GM12878 (cell line): ENCODE measurements at regions of chr3 and their contacts with region 1.

Region 1: DNA sequence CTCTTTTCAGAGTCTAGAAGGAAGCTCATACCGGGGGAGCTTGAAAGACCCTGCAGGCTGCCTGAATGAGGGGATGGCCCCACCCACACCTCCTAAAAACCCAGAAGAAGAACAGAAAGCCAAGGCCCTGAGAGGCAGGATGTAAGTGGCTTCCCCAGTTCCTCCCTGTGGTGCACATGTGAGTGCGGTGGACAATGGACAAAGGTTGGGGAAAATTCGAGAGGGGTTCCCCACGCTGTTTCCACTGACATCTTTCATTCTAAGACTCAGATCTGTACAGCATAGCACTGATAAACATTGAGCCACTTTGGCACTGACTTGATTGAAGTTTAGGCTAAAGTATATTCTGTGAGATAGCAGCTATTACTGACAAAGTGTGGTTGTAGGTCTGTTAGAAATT is 79.5 kb upstream of the UMPS start:
- DNase-seq: peak; percentile 65
- ATAC-seq: peak; percentile 89
- H3K4me3 ChIP-seq: no peak overlapping the region
- H3K27ac ChIP-seq: peak overlapping the region; percentile 49
- H3K4me1 ChIP-seq: peaks cover 31% of the 10 kb centered on the region
- H3K27me3 ChIP-seq: no peaks in the 10 kb centered on the region
- CTCF ChIP-seq: no peak
- EP300 ChIP-seq: peak; percentile 92 to 96; a peak in 3 of 4 replicates
- POLR2A ChIP-seq: no peak
- RAD21 ChIP-seq: no peak

Region 2: GRCh38 chr3:124569761-124570160 is 81.0 kb before region 1 on chr3:
- CTCF ChIA-PET with region 1: interaction called, 18 read pairs
- POLR2A ChIA-PET with region 1: interaction called, 5 read pairs
- RAD21 ChIA-PET with region 1: interaction called, 31 read pairs
- SMC1A ChIA-PET with region 1: interaction called, 35 read pairs
- in situ Hi-C with region 1: no loop called
- intact Hi-C with region 1: no loop called
- DNase-seq: no peak
- ATAC-seq: peak; percentile 24
- H3K4me3 ChIP-seq: no peak overlapping the region
- H3K27ac ChIP-seq: no peak overlapping the region
- H3K4me1 ChIP-seq: peaks cover 6% of the 10 kb centered on the region
- H3K27me3 ChIP-seq: no peaks in the 10 kb centered on the region
- CTCF ChIP-seq: no peak
- EP300 ChIP-seq: no peak
- POLR2A ChIP-seq: no peak
- RAD21 ChIP-seq: no peak

Region 3: DNA sequence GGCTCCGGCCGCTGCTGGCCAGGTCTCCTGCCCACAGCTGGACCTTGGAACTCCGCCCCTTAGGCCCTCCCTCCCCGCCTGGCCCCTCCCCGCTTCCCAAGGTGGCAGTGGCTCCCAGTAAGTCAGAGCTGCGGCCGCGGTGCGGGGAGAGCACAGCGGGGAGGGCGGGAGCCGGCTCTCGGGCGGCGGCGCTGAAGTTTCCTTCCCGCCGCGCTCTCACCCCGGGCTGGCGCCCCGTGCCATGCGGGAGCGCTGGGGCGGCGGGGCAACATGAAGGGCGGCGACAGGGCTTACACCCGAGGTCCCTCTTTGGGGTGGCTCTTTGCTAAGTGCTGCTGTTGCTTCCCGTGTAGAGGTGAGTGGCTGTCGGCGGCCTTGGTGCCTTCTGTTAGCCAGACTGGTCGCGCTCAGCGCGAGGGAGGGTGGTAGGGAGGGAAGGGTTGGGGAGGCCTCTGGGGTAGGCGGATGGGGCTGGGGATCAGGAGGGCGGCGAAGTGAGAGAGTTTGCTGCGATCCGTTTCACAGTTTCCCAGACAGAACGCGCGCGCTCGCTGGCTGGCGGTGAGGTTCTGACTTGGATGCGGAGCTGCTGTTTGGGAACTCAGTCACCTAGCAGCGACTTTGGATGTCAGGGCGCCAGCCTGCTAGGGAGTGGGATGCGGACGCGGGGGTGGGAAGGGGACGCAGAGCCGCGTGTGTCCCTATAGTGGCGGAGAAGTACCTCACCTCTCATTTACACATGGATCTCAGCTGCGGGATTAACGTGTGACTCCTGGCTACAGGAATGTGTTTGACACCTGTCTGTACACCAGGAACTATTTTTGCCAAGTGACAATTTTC is 66.0 kb before region 1 on chr3:
- CTCF ChIA-PET with region 1: interaction called, 4 read pairs
- POLR2A ChIA-PET with region 1: interaction called, 5 read pairs
- RAD21 ChIA-PET with region 1: interaction called, 3 read pairs
- SMC1A ChIA-PET with region 1: interaction called, 6 read pairs
- in situ Hi-C with region 1: no loop called
- intact Hi-C with region 1: loop called (anchors 5 kb)
- DNase-seq: no peak
- ATAC-seq: peak; percentile 73
- H3K4me3 ChIP-seq: peak overlapping the region; percentile 61; the same call in 1 of the 2 replicates
- H3K27ac ChIP-seq: no peak overlapping the region
- H3K4me1 ChIP-seq: peaks cover 7% of the 10 kb centered on the region
- H3K27me3 ChIP-seq: peaks cover 3 to 10% of the 10 kb centered on the region in 2 experiments; a peak in 2 of 4 replicates
- CTCF ChIP-seq: no peak
- EP300 ChIP-seq: no peak
- POLR2A ChIP-seq: no peak
- RAD21 ChIP-seq: no peak

Region 4: GRCh38 chr3:124620600-124621063 is 30.2 kb before region 1 on chr3:
- CTCF ChIA-PET with region 1: interaction called, 10 read pairs
- POLR2A ChIA-PET with region 1: interaction called, 5 read pairs
- RAD21 ChIA-PET with region 1: interaction called, 8 read pairs
- SMC1A ChIA-PET with region 1: interaction called, 4 read pairs
- in situ Hi-C with region 1: no loop called
- intact Hi-C with region 1: no loop called
- DNase-seq: peak; percentile 38
- ATAC-seq: peak; percentile 89
- H3K4me3 ChIP-seq: 0 out of 2 replicates have a peak overlapping the region, but pooled peaks have one; percentile 19
- H3K27ac ChIP-seq: peak overlapping the region; percentile 84
- H3K4me1 ChIP-seq: peaks cover 18% of the 10 kb centered on the region
- H3K27me3 ChIP-seq: no peaks in the 10 kb centered on the region
- CTCF ChIP-seq: no peak
- EP300 ChIP-seq: no peak
- POLR2A ChIP-seq: no peak
- RAD21 ChIP-seq: no peak

Region 5: GRCh38 chr3:124639406-124640237 is 11.2 kb before region 1 on chr3:
- CTCF ChIA-PET with region 1: interaction called, 23 read pairs
- POLR2A ChIA-PET with region 1: interaction called, 25 read pairs
- RAD21 ChIA-PET with region 1: interaction called, 59 read pairs
- SMC1A ChIA-PET with region 1: interaction called, 43 read pairs
- in situ Hi-C with region 1: no loop called
- intact Hi-C with region 1: no loop called
- DNase-seq: peak; percentile 77
- ATAC-seq: peak; percentile 81
- H3K4me3 ChIP-seq: no peak overlapping the region; the same call in 1 of the 2 replicates
- H3K27ac ChIP-seq: peak overlapping the region; percentile 40
- H3K4me1 ChIP-seq: peaks cover 23% of the 10 kb centered on the region
- H3K27me3 ChIP-seq: no peaks in the 10 kb centered on the region
- CTCF ChIP-seq: no peak
- EP300 ChIP-seq: peak in 1 of 2 experiments; percentile 47; a peak in 2 of 4 replicates
- POLR2A ChIP-seq: no peak
- RAD21 ChIP-seq: no peak

Region 6: GRCh38 chr3:124698030-124698770 is 47.4 kb after region 1 on chr3:
- CTCF ChIA-PET with region 1: no interaction called
- POLR2A ChIA-PET with region 1: no interaction called
- RAD21 ChIA-PET with region 1: no interaction called
- SMC1A ChIA-PET with region 1: no interaction called
- in situ Hi-C with region 1: no loop called
- intact Hi-C with region 1: no loop called
- DNase-seq: no peak
- ATAC-seq: no peak
- H3K4me3 ChIP-seq: no peak overlapping the region
- H3K27ac ChIP-seq: no peak overlapping the region
- H3K4me1 ChIP-seq: no peaks in the 10 kb centered on the region
- H3K27me3 ChIP-seq: peaks cover 0 to 2% of the 10 kb centered on the region in 2 experiments; a peak in 1 of 4 replicates
- CTCF ChIP-seq: no peak
- EP300 ChIP-seq: no peak
- POLR2A ChIP-seq: no peak
- RAD21 ChIP-seq: no peak

Region 7: DNA sequence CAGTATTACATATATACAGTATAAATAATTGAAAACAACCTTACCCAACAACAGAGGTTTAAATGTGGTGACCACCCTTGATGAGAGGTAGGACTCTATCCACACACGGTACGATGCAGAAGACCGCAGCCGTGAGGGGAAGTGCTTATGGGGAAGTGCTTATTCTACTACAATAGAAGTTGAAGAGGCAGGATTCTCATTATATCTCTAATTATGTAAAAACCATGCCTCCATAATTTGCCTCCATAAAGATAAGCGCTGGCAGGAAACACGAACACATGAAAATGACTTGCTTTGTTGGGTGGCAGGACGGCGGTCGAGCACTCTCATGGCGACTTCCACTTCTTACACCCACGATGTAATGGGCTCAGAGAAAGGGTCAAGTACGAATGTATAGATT is 291.0 kb after region 1 on chr3:
- CTCF ChIA-PET with region 1: no interaction called
- POLR2A ChIA-PET with region 1: no interaction called
- RAD21 ChIA-PET with region 1: no interaction called
- SMC1A ChIA-PET with region 1: no interaction called
- in situ Hi-C with region 1: no loop called
- intact Hi-C with region 1: no loop called
- DNase-seq: no peak
- ATAC-seq: peak; percentile 49
- H3K4me3 ChIP-seq: no peak overlapping the region
- H3K27ac ChIP-seq: no peak overlapping the region
- H3K4me1 ChIP-seq: no peaks in the 10 kb centered on the region; the same call in 1 of the 2 replicates
- H3K27me3 ChIP-seq: no peaks in the 10 kb centered on the region; a peak in 1 of 4 replicates
- CTCF ChIP-seq: no peak
- EP300 ChIP-seq: no peak
- POLR2A ChIP-seq: no peak
- RAD21 ChIP-seq: no peak